Naive thymus-derived CD4-positive, alpha-beta T cell (primary cell): ENCODE measurements at regions of chr2 and their contacts with region 1.

Region 1: GRCh38 chr2:239380831-239381708 is 19.8 kb downstream of the HDAC4 start:
- DNase-seq: peak; percentile 34 to 87 (median 81)
- ATAC-seq: peak; percentile 91
- H3K4me3 ChIP-seq: peak overlapping the region; percentile 20
- H3K4me3 Mint-ChIP-seq: peak overlapping the region; percentile 69 to 93 (median 88)
- H3K27ac ChIP-seq: peak overlapping the region; percentile 67
- H3K27ac Mint-ChIP-seq: peak overlapping the region; percentile 90 to 99 (median 96)
- H3K4me1 ChIP-seq: peaks cover 0 to 15% of the 10 kb centered on the region in 2 donors
- H3K4me1 Mint-ChIP-seq: peaks cover 21 to 47% (median 35%) of the 10 kb centered on the region in 7 donors
- H3K27me3 ChIP-seq: no peaks in the 10 kb centered on the region
- H3K27me3 Mint-ChIP-seq: no peaks in the 10 kb centered on the region

Region 2: GRCh38 chr2:239326831-239327535 is 54.1 kb before region 1 on chr2:
- CTCF ChIA-PET with region 1: interaction called, 3 read pairs
- POLR2A ChIA-PET with region 1: interaction called, 7 read pairs
- intact Hi-C with region 1: loop called (anchors 1 to 5 kb)
- DNase-seq: peak in 8 of 9 donors; percentile 54 to 81 (median 72)
- ATAC-seq: peak; percentile 83
- H3K4me3 ChIP-seq: no peak overlapping the region
- H3K4me3 Mint-ChIP-seq: peak overlapping the region; percentile 55 to 79 (median 71)
- H3K27ac ChIP-seq: peak overlapping the region; percentile 68
- H3K27ac Mint-ChIP-seq: peak overlapping the region; percentile 89 to 100 (median 95)
- H3K4me1 ChIP-seq: peaks cover 20 to 65% of the 10 kb centered on the region in 2 donors
- H3K4me1 Mint-ChIP-seq: peaks cover 54 to 99% (median 89%) of the 10 kb centered on the region in 7 donors
- H3K27me3 ChIP-seq: no peaks in the 10 kb centered on the region
- H3K27me3 Mint-ChIP-seq: no peaks in the 10 kb centered on the region